ENCODE measurements at regions of chr6 and their contacts with region 1.

Region 1: GRCh38 chr6:149082286-149082707 is 235.2 kb upstream of the TAB2 start:
- DNase-seq: peak; percentile 70 to 88 (median 76)
- ATAC-seq: peak in 3 of 4 donors; percentile 57 to 73 (median 69)
- H3K4me3 ChIP-seq: no peak overlapping the region
- H3K27ac ChIP-seq: no peak overlapping the region
- H3K4me1 ChIP-seq: peaks cover 0 to 21% (median 14%) of the 10 kb centered on the region in 12 donors
- H3K27me3 ChIP-seq: no peaks in the 10 kb centered on the region
- CTCF ChIP-seq: peak; percentile 70 to 89 (median 80)
- POLR2A ChIP-seq: no peak

Region 2: GRCh38 chr6:148800535-148800934 is 281.8 kb before region 1 on chr6:
- intact Hi-C with region 1: no loop called
- DNase-seq: no peak
- ATAC-seq: no peak
- H3K4me3 ChIP-seq: no peak overlapping the region
- H3K27ac ChIP-seq: no peak overlapping the region
- H3K4me1 ChIP-seq: peaks cover 0 to 16% (median 0%) of the 10 kb centered on the region in 12 donors
- H3K27me3 ChIP-seq: no peaks in the 10 kb centered on the region
- CTCF ChIP-seq: no peak
- POLR2A ChIP-seq: no peak

Region 3: GRCh38 chr6:149028767-149029405 is 53.4 kb before region 1 on chr6:
- intact Hi-C with region 1: loop called in 6 of 10 experiments (anchors 5 kb)
- DNase-seq: peak in 4 of 5 donors; percentile 30 to 80 (median 62)
- ATAC-seq: peak; percentile 35 to 75 (median 70)
- H3K4me3 ChIP-seq: no peak overlapping the region
- H3K27ac ChIP-seq: no peak overlapping the region
- H3K4me1 ChIP-seq: peaks cover 0 to 18% (median 0%) of the 10 kb centered on the region in 12 donors
- H3K27me3 ChIP-seq: no peaks in the 10 kb centered on the region
- CTCF ChIP-seq: peak; percentile 64 to 91 (median 80)
- POLR2A ChIP-seq: no peak